Panc1 (cell line): ENCODE measurements at regions of chr1 and their contacts with region 1.

Region 1: DNA sequence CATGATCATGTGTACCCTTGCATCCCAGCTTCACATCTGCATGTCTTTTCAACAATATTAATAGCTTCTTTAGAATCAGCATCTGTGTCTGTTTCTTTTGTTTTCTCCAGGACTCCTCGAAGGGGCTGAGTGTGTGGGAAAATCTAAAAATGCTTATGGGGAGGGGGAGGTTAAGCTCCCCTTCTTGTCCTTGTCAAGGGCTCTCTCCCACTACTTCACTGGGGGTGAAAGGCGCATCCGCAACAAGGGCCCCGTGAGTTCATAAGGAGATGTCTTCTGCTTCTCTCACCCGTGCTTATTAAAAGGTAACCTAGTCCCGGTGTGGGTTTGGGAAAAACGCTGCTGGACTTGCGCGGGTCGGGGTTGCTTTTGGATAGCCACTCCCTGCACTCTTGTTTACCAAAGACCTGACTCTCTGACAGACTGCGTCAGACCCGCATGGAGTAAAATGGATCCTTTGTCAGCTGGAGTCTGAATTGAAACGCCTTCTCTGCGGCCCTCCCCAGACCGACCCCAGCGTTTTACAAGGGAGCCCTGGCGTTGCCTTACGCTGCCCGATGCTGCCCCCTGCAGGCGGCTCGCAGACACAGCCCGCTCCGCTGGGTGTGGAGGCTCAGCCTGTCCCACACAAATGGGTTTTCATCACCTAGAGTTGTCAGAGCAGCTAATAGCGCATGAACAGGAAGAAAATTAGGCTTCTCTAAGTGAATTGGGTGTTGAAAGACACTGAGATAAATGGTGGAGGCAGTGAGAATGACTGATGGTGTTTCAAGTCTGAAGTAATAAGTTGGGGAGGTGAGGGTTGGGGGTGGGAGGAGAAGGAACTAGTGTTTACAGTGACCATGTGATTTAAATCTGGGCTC is 53.8 kb downstream of the IER5 start:
- DNase-seq: peak; percentile 64
- ATAC-seq: peak; percentile 99
- H3K4me3 ChIP-seq: peak overlapping the region; percentile 19 to 52
- H3K27ac ChIP-seq: peak overlapping the region; percentile 53
- H3K4me1 ChIP-seq: peaks cover 10% of the 10 kb centered on the region
- H3K27me3 ChIP-seq: no peaks in the 10 kb centered on the region
- CTCF ChIP-seq: peak; percentile 92

Region 2: DNA sequence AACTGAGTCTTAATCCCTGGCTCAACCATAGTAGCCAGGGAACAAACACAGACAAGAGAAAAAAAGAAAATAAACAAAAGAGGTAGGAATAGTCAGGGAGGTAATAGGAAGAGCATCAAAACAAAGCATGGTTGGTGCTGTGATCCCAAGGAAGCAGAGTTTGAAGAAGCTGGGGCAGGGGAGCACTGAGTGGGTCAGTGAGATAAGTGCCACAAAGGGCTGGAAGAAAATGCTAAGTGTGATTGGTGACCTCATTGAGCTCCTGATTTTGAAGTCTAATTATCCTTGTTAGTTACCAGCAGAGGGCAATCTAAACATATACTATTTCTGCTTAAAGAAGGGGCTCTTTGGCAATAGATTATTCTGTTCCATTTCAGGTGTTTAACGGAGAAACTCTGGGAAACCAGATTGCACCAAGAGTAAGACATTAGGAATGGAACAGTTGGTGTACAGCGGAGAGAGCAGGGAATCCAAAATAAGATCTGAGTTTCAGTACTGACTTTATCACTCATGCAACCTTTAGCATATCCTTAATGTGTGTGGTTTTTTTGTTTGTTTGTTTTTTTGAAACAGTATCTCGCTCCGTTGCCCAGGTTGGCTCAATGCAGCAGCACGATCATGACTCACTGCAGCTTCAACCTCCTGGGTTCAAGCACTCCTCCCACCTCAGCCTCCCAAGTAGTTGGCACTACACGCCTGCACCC is 260.4 kb before region 1 on chr1:
- CTCF ChIA-PET with region 1: interaction called, 5 read pairs
- POLR2A ChIA-PET with region 1: no interaction called
- in situ Hi-C with region 1: no loop called
- intact Hi-C with region 1: loop called (anchors 5 kb)
- DNase-seq: peak; percentile 20
- ATAC-seq: peak; percentile 79
- H3K4me3 ChIP-seq: no peak overlapping the region
- H3K27ac ChIP-seq: no peak overlapping the region
- H3K4me1 ChIP-seq: no peaks in the 10 kb centered on the region
- H3K27me3 ChIP-seq: no peaks in the 10 kb centered on the region
- CTCF ChIP-seq: peak; percentile 69

Region 3: GRCh38 chr1:181038399-181038873 is 103.9 kb before region 1 on chr1:
- CTCF ChIA-PET with region 1: no interaction called
- POLR2A ChIA-PET with region 1: no interaction called
- in situ Hi-C with region 1: no loop called
- intact Hi-C with region 1: loop called (anchors 1 kb)
- DNase-seq: peak; percentile 45
- ATAC-seq: peak; percentile 90
- H3K4me3 ChIP-seq: no peak overlapping the region
- H3K27ac ChIP-seq: no peak overlapping the region
- H3K4me1 ChIP-seq: peaks cover 8% of the 10 kb centered on the region
- H3K27me3 ChIP-seq: no peaks in the 10 kb centered on the region
- CTCF ChIP-seq: peak; percentile 85

Region 4: GRCh38 chr1:181083842-181084605 is 58.3 kb before region 1 on chr1:
- CTCF ChIA-PET with region 1: interaction called, 9 read pairs
- POLR2A ChIA-PET with region 1: interaction called, 4 read pairs
- in situ Hi-C with region 1: no loop called
- intact Hi-C with region 1: loop called (anchors 1 kb)
- DNase-seq: peak; percentile 67
- ATAC-seq: peak; percentile 59
- H3K4me3 ChIP-seq: no peak overlapping the region
- H3K27ac ChIP-seq: no peak overlapping the region
- H3K4me1 ChIP-seq: peaks cover 17% of the 10 kb centered on the region
- H3K27me3 ChIP-seq: no peaks in the 10 kb centered on the region
- CTCF ChIP-seq: peak; percentile 80

Region 5: DNA sequence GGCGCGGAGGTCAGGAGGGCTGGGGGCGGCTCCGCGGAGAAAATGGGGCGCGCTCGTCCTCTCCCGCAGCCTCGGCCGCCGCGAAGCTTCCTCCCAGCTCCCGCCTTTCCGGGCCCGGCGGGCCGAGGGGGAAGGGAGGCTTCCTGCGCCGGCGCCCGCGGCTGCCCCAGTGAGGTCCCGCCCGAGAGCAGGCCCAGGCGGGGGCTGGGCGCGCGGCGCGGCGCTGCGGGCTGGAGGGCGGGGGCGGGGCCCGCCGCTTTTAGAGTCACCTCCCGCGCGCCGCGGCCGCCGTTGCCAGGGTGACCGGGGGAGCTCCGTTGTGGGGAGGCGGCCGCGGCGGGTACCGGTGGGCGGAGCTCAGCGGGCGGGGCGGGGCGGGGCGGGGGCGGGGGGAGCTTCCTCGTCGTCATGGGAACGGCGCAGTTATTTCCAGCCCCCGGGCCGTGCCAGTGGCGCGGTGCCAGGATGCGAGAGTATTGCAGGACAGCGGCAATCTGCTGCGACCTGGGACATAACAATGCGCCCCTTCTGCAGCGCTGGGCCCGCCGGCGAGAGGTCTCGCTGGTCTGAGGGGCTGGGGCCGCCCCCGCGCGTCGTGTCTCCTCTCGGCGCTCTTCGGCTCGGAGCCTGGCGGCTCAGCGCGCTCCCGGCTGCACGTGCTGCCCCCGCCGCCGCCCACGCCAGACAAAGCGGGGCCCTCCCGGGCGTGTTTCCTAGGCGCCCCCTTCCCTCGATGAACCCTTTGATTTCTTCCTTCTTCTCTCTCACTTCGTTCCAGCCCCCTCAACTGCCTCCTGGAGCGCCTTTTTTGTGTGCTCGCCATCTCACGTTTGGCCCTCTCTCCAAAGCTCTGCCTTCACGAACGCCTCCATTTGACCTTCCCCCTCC is 36.9 kb before region 1 on chr1:
- CTCF ChIA-PET with region 1: no interaction called
- POLR2A ChIA-PET with region 1: interaction called, 11 read pairs
- in situ Hi-C with region 1: no loop called
- intact Hi-C with region 1: no loop called
- DNase-seq: no peak
- ATAC-seq: peak; percentile 88
- H3K4me3 ChIP-seq: peak overlapping the region; percentile 66 to 81
- H3K27ac ChIP-seq: peak overlapping the region; percentile 92
- H3K4me1 ChIP-seq: peaks cover 71% of the 10 kb centered on the region
- H3K27me3 ChIP-seq: no peaks in the 10 kb centered on the region
- CTCF ChIP-seq: no peak

Region 6: DNA sequence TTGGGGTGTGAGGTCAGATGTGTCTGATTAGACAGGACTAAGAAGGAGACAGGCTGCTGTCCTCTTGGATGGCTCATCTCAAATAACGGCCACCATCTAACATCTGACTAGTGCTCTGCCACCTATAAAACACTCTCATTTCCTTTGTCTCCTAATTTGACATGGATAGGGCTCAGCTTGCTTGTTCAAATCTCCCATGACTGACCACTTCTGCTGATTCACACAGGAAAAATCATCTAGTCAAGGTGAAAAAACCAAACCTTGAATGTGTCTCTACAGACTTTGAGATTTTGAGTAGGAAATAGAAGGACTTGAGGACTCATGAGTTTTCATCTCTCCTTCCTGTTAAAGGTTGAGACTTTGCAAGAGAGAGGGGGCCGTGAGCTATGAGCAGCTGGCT is 96.8 kb after region 1 on chr1:
- CTCF ChIA-PET with region 1: no interaction called
- POLR2A ChIA-PET with region 1: no interaction called
- in situ Hi-C with region 1: no loop called
- intact Hi-C with region 1: no loop called
- DNase-seq: no peak
- ATAC-seq: no peak
- H3K4me3 ChIP-seq: no peak overlapping the region
- H3K27ac ChIP-seq: no peak overlapping the region
- H3K4me1 ChIP-seq: no peaks in the 10 kb centered on the region
- H3K27me3 ChIP-seq: no peaks in the 10 kb centered on the region
- CTCF ChIP-seq: no peak